ENCODE measurements at regions of chr3 and their contacts with region 1.

Region 1: GRCh38 chr3:145533696-145534095 is 627.3 kb downstream of the PLOD2 start:
- DNase-seq: no peak

Region 2: DNA sequence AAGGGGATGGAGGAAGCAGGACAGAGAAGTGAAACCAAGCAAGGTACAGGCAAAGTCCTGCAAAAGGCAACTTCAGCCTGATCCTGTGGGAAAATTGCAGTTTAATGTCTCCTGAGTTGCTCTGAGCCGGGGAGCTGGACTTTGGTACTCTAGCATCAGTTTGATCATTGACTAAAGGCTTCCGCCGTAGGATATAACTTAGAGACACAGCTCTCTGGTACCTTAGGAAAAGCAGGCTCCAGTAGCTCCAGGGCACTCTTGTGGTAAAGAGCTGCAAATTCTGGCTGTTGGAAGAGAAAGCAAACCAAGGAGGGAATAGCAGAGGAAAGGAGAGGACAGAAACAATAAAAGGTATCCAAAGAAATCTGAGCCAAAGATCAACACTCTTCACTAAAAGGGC is 106.2 kb after region 1 on chr3:
- intact Hi-C with region 1: loop called (anchors 5 kb)
- DNase-seq: no peak

Measured in cardiac septum (tissue), 1 donor.